ENCODE measurements at regions of chr10 and their contacts with region 1.

Region 1: DNA sequence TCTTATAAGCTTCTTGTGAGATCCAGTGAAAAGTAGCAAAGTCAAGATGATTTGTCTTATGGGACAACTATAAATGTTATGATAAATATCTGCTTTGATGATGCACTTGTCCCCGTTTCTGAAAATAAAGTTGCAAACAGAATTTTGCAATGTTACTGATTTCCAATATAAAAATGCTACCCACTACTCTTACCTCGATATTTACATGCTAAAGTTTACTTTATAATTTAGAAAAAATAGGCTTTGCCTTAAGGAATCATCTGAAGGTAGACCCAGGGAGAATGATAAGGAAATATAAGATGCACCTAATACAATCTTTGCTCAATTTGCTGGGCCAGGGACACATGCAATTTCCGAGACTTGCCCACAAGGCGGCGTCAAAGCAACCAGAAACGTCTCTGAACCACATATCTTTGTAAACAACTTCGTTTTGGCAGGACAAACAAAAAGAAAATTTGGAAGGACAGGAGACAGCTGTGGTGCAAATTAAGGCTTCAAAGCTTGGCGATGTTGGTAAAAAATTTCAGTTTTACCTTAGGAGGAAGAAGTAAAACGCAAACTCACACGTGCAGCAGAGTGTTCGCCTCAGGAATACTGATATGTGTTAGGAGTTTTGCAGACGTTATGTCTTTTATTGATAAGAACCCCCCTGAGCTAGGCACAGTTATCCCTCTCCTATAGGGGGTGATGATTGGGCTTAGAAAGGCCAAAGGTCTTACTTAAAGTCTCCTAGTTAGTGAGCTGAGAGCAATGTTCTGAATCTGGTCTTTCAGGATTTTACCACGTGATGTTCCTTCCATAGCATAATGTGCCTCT is 134.4 kb downstream of the PRKCQ start:
- DNase-seq: no peak
- H3K4me3 ChIP-seq: no peak overlapping the region
- H3K27ac ChIP-seq: no peak overlapping the region
- H3K4me1 ChIP-seq: no peaks in the 10 kb centered on the region
- H3K27me3 ChIP-seq: no peaks in the 10 kb centered on the region
- CTCF ChIP-seq: peak; percentile 58 to 67 (median 66)
- EP300 ChIP-seq: no peak
- POLR2A ChIP-seq: no peak
- RAD21 ChIP-seq: peak; percentile 60 to 65

Region 2: GRCh38 chr10:6135039-6135438 is 310.7 kb before region 1 on chr10:
- CTCF ChIA-PET with region 1: no interaction called
- POLR2A ChIA-PET with region 1: no interaction called
- DNase-seq: no peak
- H3K4me3 ChIP-seq: no peak overlapping the region
- H3K27ac ChIP-seq: no peak overlapping the region
- H3K4me1 ChIP-seq: peaks cover 0 to 10% (median 1%) of the 10 kb centered on the region in 4 experiments; a peak in 4 of 7 replicates
- H3K27me3 ChIP-seq: 0 out of 7 replicates have a peak, but pooled peaks cover 0 to 2% (median 0%) of the 10 kb centered on the region in 4 experiments
- CTCF ChIP-seq: no peak
- EP300 ChIP-seq: no peak
- POLR2A ChIP-seq: no peak
- RAD21 ChIP-seq: no peak

Region 3: GRCh38 chr10:6328699-6329423 is 116.8 kb before region 1 on chr10:
- CTCF ChIA-PET with region 1: no interaction called
- POLR2A ChIA-PET with region 1: no interaction called
- DNase-seq: no peak
- H3K4me3 ChIP-seq: no peak overlapping the region
- H3K27ac ChIP-seq: no peak overlapping the region
- H3K4me1 ChIP-seq: no peaks in the 10 kb centered on the region
- H3K27me3 ChIP-seq: no peaks in the 10 kb centered on the region
- CTCF ChIP-seq: no peak
- EP300 ChIP-seq: no peak
- POLR2A ChIP-seq: no peak
- RAD21 ChIP-seq: no peak

Region 4: DNA sequence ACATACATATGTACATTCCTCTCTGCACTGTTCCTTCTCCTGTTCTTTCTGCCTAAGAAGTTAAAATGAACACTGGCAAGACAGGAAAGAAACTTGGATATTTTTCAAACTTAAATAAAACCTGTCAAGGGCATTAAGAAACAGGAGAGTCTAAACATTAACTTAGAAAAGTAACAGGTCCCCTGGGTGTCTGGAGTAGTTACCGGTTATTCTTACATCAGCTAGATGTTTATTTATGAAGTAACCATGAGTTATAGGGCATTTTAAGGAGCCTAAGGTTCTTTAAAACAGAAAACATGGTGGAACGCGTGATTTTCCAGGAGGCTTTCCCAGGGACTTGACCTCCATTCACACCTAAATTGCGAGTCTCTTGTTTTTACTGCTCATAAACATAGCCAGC is 13.8 kb before region 1 on chr10:
- CTCF ChIA-PET with region 1: interaction called, 17 read pairs
- POLR2A ChIA-PET with region 1: no interaction called
- DNase-seq: no peak
- H3K4me3 ChIP-seq: no peak overlapping the region
- H3K27ac ChIP-seq: no peak overlapping the region
- H3K4me1 ChIP-seq: no peaks in the 10 kb centered on the region
- H3K27me3 ChIP-seq: no peaks in the 10 kb centered on the region
- CTCF ChIP-seq: no peak
- EP300 ChIP-seq: no peak
- POLR2A ChIP-seq: no peak
- RAD21 ChIP-seq: no peak

Region 5: GRCh38 chr10:6464862-6465430 is 19.2 kb after region 1 on chr10:
- CTCF ChIA-PET with region 1: interaction called, 30 read pairs
- POLR2A ChIA-PET with region 1: no interaction called
- DNase-seq: no peak
- H3K4me3 ChIP-seq: no peak overlapping the region
- H3K27ac ChIP-seq: no peak overlapping the region
- H3K4me1 ChIP-seq: peaks cover 0 to 2% (median 0%) of the 10 kb centered on the region in 4 experiments; a peak in 1 of 7 replicates
- H3K27me3 ChIP-seq: no peaks in the 10 kb centered on the region
- CTCF ChIP-seq: no peak
- EP300 ChIP-seq: no peak
- POLR2A ChIP-seq: no peak
- RAD21 ChIP-seq: no peak

Region 6: GRCh38 chr10:6493521-6494441 is 48.1 kb after region 1 on chr10:
- CTCF ChIA-PET with region 1: no interaction called
- POLR2A ChIA-PET with region 1: no interaction called
- DNase-seq: no peak
- H3K4me3 ChIP-seq: no peak overlapping the region
- H3K27ac ChIP-seq: no peak overlapping the region
- H3K4me1 ChIP-seq: no peaks in the 10 kb centered on the region
- H3K27me3 ChIP-seq: no peaks in the 10 kb centered on the region
- CTCF ChIP-seq: no peak
- EP300 ChIP-seq: no peak
- POLR2A ChIP-seq: no peak
- RAD21 ChIP-seq: no peak